ENCODE measurements at regions of chr4 and their contacts with region 1.

Region 1: GRCh38 chr4:143335979-143336780 is 496 bp upstream of the GAB1 start:
- DNase-seq: peak; percentile 94 to 96
- ATAC-seq: peak; percentile 95
- H3K4me3 ChIP-seq: peak overlapping the region; percentile 84 to 90
- H3K27ac ChIP-seq: peak overlapping the region; percentile 78 to 79
- H3K4me1 ChIP-seq: peaks cover 0 to 3% of the 10 kb centered on the region in 2 donors
- H3K27me3 ChIP-seq: no peaks in the 10 kb centered on the region

Region 2: DNA sequence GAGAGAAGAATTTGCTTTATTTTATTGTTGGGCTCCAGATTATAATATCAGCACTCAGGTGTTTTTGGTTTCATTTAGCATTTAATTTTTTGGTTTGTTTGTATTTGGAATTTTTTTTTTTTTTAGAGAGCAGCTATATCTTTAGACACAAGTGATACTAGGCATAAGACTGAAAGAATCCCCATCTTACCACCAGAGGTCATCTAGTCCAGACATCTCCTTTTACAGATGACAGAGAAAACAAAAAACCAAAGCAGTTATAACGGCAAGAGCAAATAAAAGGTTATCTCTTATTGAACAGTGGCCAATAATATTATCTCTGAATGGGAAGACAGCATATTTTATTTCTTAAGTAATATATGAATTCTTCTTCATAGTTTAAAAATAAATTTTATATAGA is 128.6 kb before region 1 on chr4:
- intact Hi-C with region 1: loop called (anchors 5 kb)
- DNase-seq: no peak
- ATAC-seq: peak; percentile 74
- H3K4me3 ChIP-seq: no peak overlapping the region
- H3K27ac ChIP-seq: no peak overlapping the region
- H3K4me1 ChIP-seq: no peaks in the 10 kb centered on the region
- H3K27me3 ChIP-seq: no peaks in the 10 kb centered on the region

Region 3: DNA sequence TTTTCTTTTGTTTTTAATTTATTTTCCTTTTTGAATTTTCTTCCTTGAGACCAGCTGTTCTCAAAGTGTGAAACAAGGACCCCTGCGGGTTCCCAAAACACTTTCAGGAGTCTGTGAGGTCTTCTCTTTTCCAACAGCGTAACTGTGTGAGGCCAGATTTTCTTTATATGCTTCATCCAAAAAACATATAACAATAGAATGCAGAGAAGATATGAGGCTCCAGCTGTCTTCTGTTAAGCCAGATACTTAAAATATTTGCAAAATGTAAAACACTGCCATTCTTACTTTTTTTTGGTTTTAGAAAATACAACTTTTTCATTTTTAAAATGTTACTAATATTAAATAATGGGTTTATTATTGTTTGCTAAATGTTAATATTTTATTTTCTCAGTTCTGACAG is 123.6 kb before region 1 on chr4:
- intact Hi-C with region 1: loop called in 1 of 2 experiments (anchors 5 kb)
- DNase-seq: no peak
- ATAC-seq: no peak
- H3K4me3 ChIP-seq: no peak overlapping the region
- H3K27ac ChIP-seq: no peak overlapping the region
- H3K4me1 ChIP-seq: no peaks in the 10 kb centered on the region
- H3K27me3 ChIP-seq: no peaks in the 10 kb centered on the region

Region 4: DNA sequence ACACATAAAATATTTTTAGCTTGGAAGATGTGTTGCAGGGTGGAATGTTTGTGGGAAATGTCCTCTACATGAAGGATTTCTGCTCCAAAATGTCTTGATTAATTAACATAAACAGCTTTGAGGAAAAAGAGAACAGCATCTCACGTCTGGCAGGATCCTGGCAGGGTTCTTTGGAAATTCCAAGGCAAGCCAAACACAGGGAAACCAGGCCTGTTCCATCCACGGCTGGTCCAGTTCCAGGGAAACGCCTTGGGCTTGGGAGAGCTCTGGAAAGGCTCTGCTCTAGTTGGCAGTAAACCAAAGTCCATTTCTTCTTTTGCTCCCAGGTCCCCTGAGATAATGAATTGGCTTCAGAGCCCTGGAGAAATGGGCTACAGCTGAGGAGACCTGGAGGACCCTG is 41.9 kb before region 1 on chr4:
- intact Hi-C with region 1: loop called in 1 of 2 experiments (anchors 5 kb)
- DNase-seq: peak; percentile 89
- ATAC-seq: peak; percentile 82
- H3K4me3 ChIP-seq: no peak overlapping the region
- H3K27ac ChIP-seq: peak overlapping the region in 1 of 2 donors; percentile 20
- H3K4me1 ChIP-seq: no peaks in the 10 kb centered on the region
- H3K27me3 ChIP-seq: no peaks in the 10 kb centered on the region

Region 5: GRCh38 chr4:143359644-143360193 is 23.5 kb after region 1 on chr4:
- intact Hi-C with region 1: loop called in 1 of 2 experiments (anchors 2 kb)
- DNase-seq: no peak
- ATAC-seq: no peak
- H3K4me3 ChIP-seq: no peak overlapping the region
- H3K27ac ChIP-seq: peak overlapping the region; percentile 93 to 94
- H3K4me1 ChIP-seq: peaks cover 13 to 30% of the 10 kb centered on the region in 2 donors
- H3K27me3 ChIP-seq: no peaks in the 10 kb centered on the region

Region 6: GRCh38 chr4:143406523-143406922 is 70.3 kb after region 1 on chr4:
- intact Hi-C with region 1: loop called in 1 of 2 experiments (anchors 5 kb)
- DNase-seq: peak; percentile 83 to 87
- ATAC-seq: peak; percentile 69
- H3K4me3 ChIP-seq: no peak overlapping the region
- H3K27ac ChIP-seq: peak overlapping the region in 1 of 2 donors; percentile 39
- H3K4me1 ChIP-seq: peaks cover 16 to 34% of the 10 kb centered on the region in 2 donors
- H3K27me3 ChIP-seq: no peaks in the 10 kb centered on the region

Region 7: GRCh38 chr4:143482840-143483239 is 146.7 kb after region 1 on chr4:
- intact Hi-C with region 1: loop called in 1 of 2 experiments (anchors 5 kb)
- DNase-seq: no peak
- ATAC-seq: no peak
- H3K4me3 ChIP-seq: no peak overlapping the region
- H3K27ac ChIP-seq: no peak overlapping the region
- H3K4me1 ChIP-seq: no peaks in the 10 kb centered on the region
- H3K27me3 ChIP-seq: no peaks in the 10 kb centered on the region